GM10248 (cell line): ENCODE measurements at regions of chr22 and their contacts with region 1.

Region 1: DNA sequence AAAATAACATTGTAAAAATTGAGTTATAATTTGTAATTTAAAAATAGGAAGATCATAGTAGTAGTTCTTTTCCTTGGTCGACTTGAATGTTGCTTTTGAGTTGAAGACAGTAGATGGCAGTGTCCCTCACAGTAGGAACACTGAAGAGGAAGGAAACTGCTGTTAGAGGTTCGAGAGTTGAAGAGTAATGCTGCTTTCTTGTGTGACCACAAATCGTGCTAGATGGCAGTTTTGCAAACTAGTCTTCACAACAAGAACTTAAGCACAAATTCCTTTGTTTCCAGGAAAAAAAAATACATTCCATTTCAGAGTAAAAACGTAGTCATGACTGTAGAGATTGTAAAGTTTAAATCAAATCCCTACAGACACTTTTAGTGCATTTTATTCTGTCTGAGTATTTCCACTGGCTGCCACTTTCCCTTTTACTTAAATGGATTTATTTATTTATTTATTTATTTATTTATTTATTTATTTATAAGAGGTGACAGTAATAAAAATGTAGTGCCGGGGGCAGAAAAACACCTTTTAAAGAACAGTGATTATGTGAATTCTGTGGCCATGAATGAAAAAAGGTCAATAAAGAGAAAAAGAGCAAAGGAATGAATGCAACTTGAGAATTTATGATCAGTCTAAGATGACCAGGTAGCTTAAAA is 54.6 kb downstream of the SPECC1L start:
- DNase-seq: peak; percentile 78
- CTCF ChIP-seq: peak; percentile 62

Region 2: GRCh38 chr22:24525416-24526037 is 200.3 kb after region 1 on chr22:
- CTCF ChIA-PET with region 1: interaction called, 18 read pairs
- POLR2A ChIA-PET with region 1: no interaction called
- DNase-seq: peak; percentile 85
- CTCF ChIP-seq: peak; percentile 90